MCF 10A (cell line): ENCODE measurements at regions of chr11 and their contacts with region 1.

Region 1: GRCh38 chr11:5380740-5381342 is 2.8 kb upstream of the OR51M1 start:
- DNase-seq: peak; percentile 74
- H3K4me3 Mint-ChIP-seq: no peak overlapping the region
- H3K27ac Mint-ChIP-seq: no peak overlapping the region
- H3K4me1 Mint-ChIP-seq: no peaks in the 10 kb centered on the region
- H3K27me3 Mint-ChIP-seq: peaks cover 23% of the 10 kb centered on the region
- CTCF ChIP-seq: peak; percentile 78

Region 2: GRCh38 chr11:4626207-4627099 is 754.4 kb before region 1 on chr11:
- CTCF ChIA-PET with region 1: interaction called, 5 read pairs
- POLR2A ChIA-PET with region 1: no interaction called
- intact Hi-C with region 1: loop called (anchors 2 kb)
- DNase-seq: peak; percentile 88
- H3K4me3 Mint-ChIP-seq: no peak overlapping the region
- H3K27ac Mint-ChIP-seq: no peak overlapping the region
- H3K4me1 Mint-ChIP-seq: no peaks in the 10 kb centered on the region
- H3K27me3 Mint-ChIP-seq: peaks cover 45% of the 10 kb centered on the region
- CTCF ChIP-seq: peak; percentile 73

Region 3: DNA sequence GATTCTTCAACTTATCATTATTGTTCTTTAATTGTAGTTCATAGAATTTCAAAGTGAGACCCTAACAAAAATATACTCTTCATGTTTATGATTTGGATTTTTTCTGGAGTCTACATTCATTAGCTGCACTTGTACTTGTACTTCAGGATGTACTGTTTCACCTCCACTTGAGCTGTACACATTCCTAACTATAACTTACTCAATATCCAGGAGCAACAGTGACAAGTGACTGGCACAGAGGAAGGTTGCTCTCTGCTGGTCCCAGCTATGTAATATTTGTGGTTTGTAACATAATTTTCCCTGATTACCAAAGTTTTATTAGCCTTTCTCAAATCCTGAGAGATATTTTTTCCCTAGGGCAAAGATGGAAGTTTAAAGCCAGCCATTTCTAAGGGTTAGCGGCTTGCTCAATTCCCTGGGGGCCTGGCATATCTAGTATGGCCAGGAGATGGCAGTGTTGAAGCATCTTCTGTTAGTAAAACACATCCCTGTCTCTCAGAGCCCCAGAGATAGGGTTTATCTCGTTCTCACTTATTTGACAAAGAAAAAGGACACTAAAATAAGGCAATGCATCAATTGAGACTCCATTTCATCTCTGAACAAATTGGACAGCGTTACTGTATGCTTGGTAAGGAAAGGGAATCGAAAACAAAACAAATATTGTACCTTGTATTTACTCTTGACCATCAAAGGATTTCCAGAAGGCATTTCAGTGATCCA is 256.9 kb before region 1 on chr11:
- CTCF ChIA-PET with region 1: interaction called, 4 read pairs
- POLR2A ChIA-PET with region 1: no interaction called
- intact Hi-C with region 1: loop called (anchors 1 kb)
- DNase-seq: peak; percentile 74
- H3K4me3 Mint-ChIP-seq: no peak overlapping the region
- H3K27ac Mint-ChIP-seq: no peak overlapping the region
- H3K4me1 Mint-ChIP-seq: no peaks in the 10 kb centered on the region
- H3K27me3 Mint-ChIP-seq: peaks cover 62% of the 10 kb centered on the region
- CTCF ChIP-seq: peak; percentile 80

Region 4: GRCh38 chr11:5204787-5205186 is 176.1 kb before region 1 on chr11:
- CTCF ChIA-PET with region 1: interaction called, 14 read pairs
- POLR2A ChIA-PET with region 1: no interaction called
- intact Hi-C with region 1: loop called (anchors 1 kb)
- DNase-seq: peak; percentile 63
- H3K4me3 Mint-ChIP-seq: no peak overlapping the region
- H3K27ac Mint-ChIP-seq: no peak overlapping the region
- H3K4me1 Mint-ChIP-seq: peaks cover 5% of the 10 kb centered on the region
- H3K27me3 Mint-ChIP-seq: peaks cover 39% of the 10 kb centered on the region
- CTCF ChIP-seq: peak; percentile 58

Region 5: DNA sequence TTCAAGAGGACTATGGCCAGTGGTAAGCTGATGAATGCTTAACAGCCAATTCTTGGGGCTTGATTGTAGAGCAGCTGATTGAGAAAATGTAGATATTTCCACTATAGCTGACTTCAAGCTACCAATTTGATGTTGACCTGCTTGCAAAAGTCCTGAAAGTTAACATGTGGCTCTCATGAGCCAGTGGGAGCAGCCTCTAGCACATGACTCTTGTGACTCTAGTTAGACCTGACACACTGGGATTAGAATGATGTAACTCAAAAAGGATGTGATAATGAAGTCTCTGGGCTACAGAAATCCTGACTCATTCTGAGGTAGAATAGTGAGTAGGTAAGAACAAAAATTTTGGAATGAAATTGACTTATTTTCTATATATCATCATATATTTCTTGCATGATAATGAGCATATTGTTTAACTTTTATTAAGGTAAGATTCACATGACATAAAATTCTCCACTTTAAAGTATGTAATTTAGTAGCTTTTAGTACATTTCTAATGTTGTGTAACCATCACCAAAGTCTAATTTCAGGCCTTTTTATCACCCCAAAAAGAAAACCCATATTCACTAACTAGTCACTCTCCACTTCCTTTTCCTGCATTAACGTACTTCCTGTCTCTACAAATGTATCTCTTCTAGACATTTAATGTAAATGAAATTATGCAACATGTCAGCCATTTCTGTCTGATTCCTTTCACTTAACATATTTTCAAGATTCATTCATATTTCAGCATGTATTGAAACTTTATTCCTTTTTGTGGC is 183.6 kb after region 1 on chr11:
- CTCF ChIA-PET with region 1: no interaction called
- POLR2A ChIA-PET with region 1: no interaction called
- intact Hi-C with region 1: no loop called
- DNase-seq: peak; percentile 7
- H3K4me3 Mint-ChIP-seq: no peak overlapping the region
- H3K27ac Mint-ChIP-seq: no peak overlapping the region
- H3K4me1 Mint-ChIP-seq: no peaks in the 10 kb centered on the region
- H3K27me3 Mint-ChIP-seq: no peaks in the 10 kb centered on the region
- CTCF ChIP-seq: no peak